ENCODE measurements at regions of chr17 and their contacts with region 1.

Region 1: DNA sequence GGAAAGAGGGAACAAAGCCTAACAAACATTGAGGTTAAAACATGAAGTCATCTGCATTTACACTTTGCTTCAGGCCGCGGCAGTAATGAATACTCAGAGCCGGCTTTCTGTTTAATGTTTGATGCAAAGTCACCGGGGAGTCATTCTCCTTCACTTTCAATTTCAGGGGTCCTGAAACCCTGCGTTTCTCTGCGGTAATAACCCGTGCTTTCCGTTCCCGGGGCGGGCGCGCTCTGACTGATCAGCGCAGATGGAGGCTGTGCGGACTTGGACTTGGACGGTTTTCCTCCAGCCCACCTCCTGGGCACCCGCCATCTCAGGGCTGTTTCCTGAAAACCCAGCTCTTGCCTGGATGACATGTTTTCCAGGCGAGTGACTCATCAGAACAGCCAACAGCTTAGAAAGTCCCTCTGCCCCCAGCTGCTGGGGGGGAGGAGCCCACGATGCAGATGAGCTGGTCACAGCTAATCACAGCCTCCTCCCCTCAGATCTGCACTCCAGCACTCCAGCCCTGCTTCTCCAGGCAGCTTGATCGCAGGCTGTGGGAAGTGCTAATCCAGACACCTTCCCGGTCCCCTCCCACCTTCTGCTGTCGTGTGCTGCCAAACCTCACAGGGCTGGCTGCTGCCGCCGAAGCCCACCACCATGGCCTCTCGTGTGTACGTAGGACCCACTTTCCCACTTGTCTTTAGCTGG is 158.6 kb upstream of the CHMP6 start:
- DNase-seq: peak; percentile 90
- ATAC-seq: peak; percentile 90
- H3K4me3 Mint-ChIP-seq: peak overlapping the region; percentile 83
- H3K27ac Mint-ChIP-seq: peak overlapping the region; percentile 98
- H3K4me1 Mint-ChIP-seq: peaks cover 56% of the 10 kb centered on the region
- H3K27me3 Mint-ChIP-seq: no peaks in the 10 kb centered on the region

Region 2: GRCh38 chr17:80847496-80848230 is 14.6 kb after region 1 on chr17:
- CTCF ChIA-PET with region 1: interaction called, 16 read pairs
- DNase-seq: peak; percentile 94
- ATAC-seq: peak; percentile 94
- H3K4me3 Mint-ChIP-seq: peak overlapping the region; percentile 1
- H3K27ac Mint-ChIP-seq: peak overlapping the region; percentile 92
- H3K4me1 Mint-ChIP-seq: peaks cover 75% of the 10 kb centered on the region
- H3K27me3 Mint-ChIP-seq: no peaks in the 10 kb centered on the region

Region 3: DNA sequence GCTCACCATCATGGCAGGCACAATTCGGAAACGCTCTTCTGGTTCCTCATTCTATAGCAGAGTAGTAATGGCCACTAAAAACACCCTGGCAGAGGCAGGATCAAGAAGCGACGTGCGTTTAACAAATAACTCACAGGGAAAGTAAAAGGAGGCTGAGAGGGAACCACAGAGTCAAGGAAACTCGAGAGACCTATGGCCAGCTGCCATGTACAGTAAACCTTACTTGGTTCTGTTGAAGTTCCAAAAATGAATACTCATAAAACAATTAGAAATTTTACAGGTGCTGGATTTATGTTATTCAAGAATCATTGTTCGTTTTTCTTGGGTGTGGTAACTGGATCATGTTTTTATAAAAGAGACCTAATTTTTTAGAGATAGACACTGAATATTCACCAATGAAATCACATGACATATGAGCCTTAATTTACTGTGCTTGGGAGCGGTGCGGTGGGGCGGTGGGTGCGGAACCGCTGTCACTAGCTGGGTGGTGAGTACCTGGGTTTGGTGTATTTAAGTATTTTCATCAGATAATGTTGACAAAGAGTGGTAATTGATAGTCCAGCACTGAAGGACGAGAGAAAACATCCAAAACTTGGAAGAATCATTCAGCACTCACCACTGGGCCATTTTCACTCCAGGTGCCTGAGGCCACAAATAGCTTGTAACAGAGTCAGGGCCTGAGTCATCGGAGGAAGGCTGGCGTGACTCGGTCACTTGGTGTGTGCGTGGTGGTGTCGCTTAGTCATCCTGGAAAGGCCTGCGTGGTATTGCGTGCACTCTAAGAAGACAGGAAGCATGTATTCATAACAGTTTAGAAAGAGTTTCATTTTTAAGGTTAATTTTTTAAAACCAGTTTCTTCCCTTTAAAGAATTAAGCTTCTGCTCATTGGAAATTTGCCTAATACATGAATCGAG is 23.2 kb after region 1 on chr17:
- CTCF ChIA-PET with region 1: interaction called, 20 read pairs
- DNase-seq: peak; percentile 98
- ATAC-seq: peak; percentile 98
- H3K4me3 Mint-ChIP-seq: peak overlapping the region; percentile 40
- H3K27ac Mint-ChIP-seq: peak overlapping the region; percentile 99
- H3K4me1 Mint-ChIP-seq: peaks cover 91% of the 10 kb centered on the region
- H3K27me3 Mint-ChIP-seq: no peaks in the 10 kb centered on the region

Measured in activated CD8-positive, alpha-beta memory T cell treated with anti-CD3 and anti-CD28 coated beads, Interleukin-2, amount 10 ng/mL, durations not matched to agents 7 days and 5 days (primary cell).